Activated CD8-positive, alpha-beta T cell treated with anti-CD3 and anti-CD28 coated beads, Interleukin-2, amount 10 ng/mL, durations not matched to agents 7 days and 5 days (primary cell): ENCODE measurements at regions of chr20 and their contacts with region 1.

Region 1: GRCh38 chr20:24992487-24993205 is at the start of gene APMAP:
- DNase-seq: peak; percentile 97
- ATAC-seq: peak; percentile 95
- H3K4me3 Mint-ChIP-seq: peak within 1 kb of the TSS; percentile 96
- H3K27ac Mint-ChIP-seq: peak within 1 kb of the TSS; percentile 94
- H3K4me1 Mint-ChIP-seq: peaks cover 52% of the 10 kb centered on the region
- H3K27me3 Mint-ChIP-seq: no peaks in the 10 kb centered on the region
- total RNA-seq, gene APMAP: 43.2 to 44.0 TPM

Region 2: DNA sequence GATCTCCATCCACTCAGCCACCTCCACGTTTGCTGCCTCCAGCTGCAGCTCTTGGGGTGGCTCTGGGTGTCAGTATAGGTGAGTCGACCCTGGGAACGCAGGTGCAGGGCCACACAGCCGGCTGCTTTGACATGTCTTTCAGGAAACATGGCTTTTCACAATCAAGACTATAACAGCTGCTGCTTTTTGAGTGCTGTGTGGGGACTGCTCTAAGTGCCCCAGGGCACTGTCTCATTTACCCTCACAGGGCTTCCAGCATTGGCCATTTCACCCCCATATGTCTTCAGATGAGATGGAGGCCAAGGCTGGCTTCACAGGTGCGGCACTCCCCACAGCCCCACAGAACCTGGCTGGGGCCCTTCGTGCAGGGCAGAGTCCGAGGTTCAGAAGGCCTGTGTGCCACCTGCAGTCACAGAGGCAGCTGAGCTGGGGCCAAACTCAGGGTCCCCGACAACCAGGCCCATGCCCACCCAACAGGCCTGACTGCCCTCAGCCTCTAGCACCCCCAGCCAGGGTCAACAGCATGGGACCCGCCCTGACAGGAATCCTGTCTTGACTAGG is 58.5 kb before region 1 on chr20:
- CTCF ChIA-PET with region 1: interaction called, 10 read pairs
- POLR2A ChIA-PET with region 1: interaction called, 4 read pairs
- DNase-seq: peak; percentile 17
- ATAC-seq: no peak
- H3K4me3 Mint-ChIP-seq: no peak overlapping the region
- H3K27ac Mint-ChIP-seq: no peak overlapping the region
- H3K4me1 Mint-ChIP-seq: peaks cover 32% of the 10 kb centered on the region
- H3K27me3 Mint-ChIP-seq: no peaks in the 10 kb centered on the region

Region 3: DNA sequence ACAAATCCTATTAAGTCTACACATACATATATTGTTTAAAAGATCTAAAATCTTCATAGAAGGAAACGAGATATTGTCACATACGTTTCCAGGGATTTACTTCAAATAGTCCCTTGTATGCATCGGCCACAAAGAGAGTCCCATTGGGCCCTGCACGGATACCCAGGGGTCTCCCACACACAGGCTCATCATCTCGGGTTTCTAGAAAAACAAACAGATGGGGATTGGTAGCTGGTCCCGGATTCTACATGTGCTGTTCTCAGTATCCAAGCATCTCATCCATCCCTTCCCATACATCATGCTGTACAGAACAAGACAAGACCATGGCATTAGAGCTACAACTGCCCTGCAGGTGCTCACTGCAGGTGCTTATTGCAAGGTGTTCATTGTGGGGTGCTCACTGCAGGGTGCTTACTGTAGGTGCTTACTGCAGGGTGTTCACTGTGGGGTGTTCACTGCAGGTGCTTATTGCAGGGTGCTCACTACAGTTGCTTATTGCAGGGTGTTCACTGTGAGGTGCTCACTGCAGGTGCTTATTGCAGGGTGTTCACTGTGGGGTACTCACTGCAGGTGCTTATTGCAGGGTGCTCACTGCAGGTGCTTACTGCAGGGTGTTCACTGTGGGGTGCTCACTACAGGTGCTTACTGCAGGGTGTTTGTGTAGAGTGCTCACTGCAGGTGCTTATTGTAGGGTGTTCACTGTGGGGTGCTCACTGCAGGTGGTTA is 21.1 kb before region 1 on chr20:
- CTCF ChIA-PET with region 1: no interaction called
- POLR2A ChIA-PET with region 1: no interaction called
- DNase-seq: no peak
- ATAC-seq: no peak
- H3K4me3 Mint-ChIP-seq: no peak overlapping the region
- H3K27ac Mint-ChIP-seq: no peak overlapping the region
- H3K4me1 Mint-ChIP-seq: peaks cover 4% of the 10 kb centered on the region
- H3K27me3 Mint-ChIP-seq: no peaks in the 10 kb centered on the region

Region 4: DNA sequence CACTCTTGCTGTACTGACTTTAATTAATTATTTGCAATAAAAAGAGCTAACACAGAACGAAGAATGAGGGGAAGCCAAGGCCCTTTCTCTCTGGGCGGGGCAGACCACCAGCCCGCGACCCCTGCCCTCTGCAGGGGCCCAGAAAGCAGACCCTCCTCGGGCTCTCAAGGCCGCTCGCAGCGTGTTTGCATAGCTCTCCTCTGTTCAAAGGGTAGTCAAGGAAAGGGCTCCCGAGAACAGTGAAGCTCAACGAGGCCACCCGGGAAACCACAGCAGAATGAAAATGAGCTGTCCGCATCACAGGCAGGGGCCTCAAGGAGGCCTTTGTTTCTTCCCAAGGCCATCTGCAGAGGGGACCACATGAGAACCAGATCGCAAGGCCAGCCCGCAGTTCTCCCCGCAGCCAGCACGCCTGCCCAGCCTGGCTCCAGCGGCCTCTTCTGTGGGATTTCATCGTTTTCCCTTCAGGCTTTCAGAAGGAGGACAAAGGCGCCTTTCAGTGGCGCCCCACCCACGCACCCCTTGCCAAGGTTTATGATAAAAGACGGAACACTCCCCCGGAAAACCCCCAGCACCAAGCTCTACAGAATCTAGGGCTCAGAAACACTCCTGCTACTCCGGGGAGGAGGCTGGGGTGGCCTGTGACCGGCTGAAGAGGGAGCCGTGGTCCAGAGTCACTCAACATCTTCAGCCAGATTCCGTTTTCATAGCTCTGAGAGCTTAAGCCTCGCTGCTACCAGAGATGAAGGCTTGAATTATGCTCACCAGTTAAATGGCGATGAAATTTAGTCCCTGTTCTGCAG is 40.0 kb after region 1 on chr20:
- CTCF ChIA-PET with region 1: interaction called, 13 read pairs
- POLR2A ChIA-PET with region 1: interaction called, 4 read pairs
- DNase-seq: no peak
- ATAC-seq: no peak
- H3K4me3 Mint-ChIP-seq: no peak overlapping the region
- H3K27ac Mint-ChIP-seq: no peak overlapping the region
- H3K4me1 Mint-ChIP-seq: peaks cover 30% of the 10 kb centered on the region
- H3K27me3 Mint-ChIP-seq: no peaks in the 10 kb centered on the region

Region 5: DNA sequence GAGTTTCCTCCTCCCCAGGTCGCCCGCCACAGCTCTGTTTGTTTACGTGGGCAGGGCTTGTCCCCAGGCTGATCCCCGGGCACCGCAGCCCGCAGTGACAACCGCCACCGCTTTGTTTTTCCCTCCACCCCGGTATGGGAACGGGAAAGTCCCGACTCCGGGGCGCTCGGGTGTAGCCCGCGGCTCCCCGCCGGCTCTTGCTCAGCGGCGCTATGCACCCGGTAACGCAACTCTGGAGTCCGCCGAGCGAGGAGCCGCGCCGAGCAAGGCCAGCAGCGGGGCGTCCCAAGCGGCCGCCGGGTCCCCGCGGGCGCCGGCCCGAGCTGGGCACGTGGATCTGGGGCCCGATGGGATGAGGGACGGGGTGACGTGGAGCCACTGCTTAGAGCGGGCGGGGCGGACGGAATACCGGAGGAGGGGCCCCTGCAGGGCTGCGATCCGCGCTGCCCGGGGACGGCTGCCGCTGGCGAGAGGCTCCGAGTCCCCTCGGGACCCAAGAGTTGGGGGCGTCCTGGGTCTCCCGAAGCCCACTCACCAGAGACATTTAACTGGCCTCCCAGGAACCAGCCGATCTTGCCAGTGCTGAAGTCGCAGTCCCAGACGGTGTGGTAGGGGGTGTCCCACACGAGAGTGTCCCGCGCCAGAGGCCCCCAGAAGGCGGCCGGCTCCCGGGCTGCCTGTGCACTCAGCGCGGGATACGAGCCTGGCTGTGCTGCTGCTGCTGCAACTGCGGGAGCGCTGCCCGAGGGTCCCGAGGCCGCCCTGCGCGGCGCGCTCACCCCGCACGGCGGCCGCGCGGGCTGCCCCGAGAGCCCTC is 64.8 kb after region 1 on chr20:
- CTCF ChIA-PET with region 1: interaction called, 191 read pairs
- POLR2A ChIA-PET with region 1: interaction called, 12 read pairs
- DNase-seq: peak; percentile 80
- ATAC-seq: peak; percentile 54
- H3K4me3 Mint-ChIP-seq: peak overlapping the region; percentile 86
- H3K27ac Mint-ChIP-seq: peak overlapping the region; percentile 87
- H3K4me1 Mint-ChIP-seq: peaks cover 47% of the 10 kb centered on the region
- H3K27me3 Mint-ChIP-seq: peaks cover 13% of the 10 kb centered on the region

Region 6: DNA sequence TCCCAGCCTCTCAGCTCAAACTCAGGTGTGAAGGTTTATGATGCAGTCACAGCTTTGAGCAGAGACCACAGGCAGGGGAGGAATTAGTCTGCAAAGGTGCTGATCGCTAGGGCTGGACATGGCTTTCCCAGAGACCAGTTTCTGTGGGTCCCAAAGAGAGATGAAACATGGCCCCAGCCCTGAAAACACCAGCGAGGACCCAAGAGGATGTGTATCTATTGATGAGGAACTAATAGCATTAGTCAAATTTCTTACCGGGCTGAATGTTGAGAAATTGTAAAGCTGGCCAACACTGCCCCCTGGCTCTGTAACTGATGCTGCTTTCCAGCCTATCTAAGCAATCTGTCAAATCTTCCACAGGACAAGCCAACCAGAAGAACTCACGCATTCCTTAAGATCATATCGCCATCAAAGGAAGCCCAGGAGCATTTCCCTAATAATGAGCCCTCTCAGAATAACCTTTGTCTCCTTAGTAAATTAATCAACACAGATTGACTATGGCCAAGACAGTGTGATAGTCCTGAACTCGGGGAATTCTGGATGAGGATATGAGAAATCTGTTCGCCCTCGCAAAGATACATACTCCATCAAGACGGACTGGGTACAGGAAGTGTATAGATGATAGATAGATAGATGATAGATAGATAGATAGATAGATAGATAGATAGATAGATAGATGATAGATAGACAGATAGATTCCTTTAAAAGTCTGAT is 73.1 kb after region 1 on chr20:
- CTCF ChIA-PET with region 1: interaction called, 191 read pairs
- POLR2A ChIA-PET with region 1: interaction called, 4 read pairs
- DNase-seq: peak; percentile 77
- ATAC-seq: peak; percentile 78
- H3K4me3 Mint-ChIP-seq: no peak overlapping the region
- H3K27ac Mint-ChIP-seq: no peak overlapping the region
- H3K4me1 Mint-ChIP-seq: peaks cover 8% of the 10 kb centered on the region
- H3K27me3 Mint-ChIP-seq: peaks cover 43% of the 10 kb centered on the region

Region 7: GRCh38 chr20:25178563-25179438 is 186.2 kb after region 1 on chr20:
- CTCF ChIA-PET with region 1: interaction called, 11 read pairs
- POLR2A ChIA-PET with region 1: no interaction called
- DNase-seq: peak; percentile 38
- ATAC-seq: no peak
- H3K4me3 Mint-ChIP-seq: no peak overlapping the region
- H3K27ac Mint-ChIP-seq: no peak overlapping the region
- H3K4me1 Mint-ChIP-seq: no peaks in the 10 kb centered on the region
- H3K27me3 Mint-ChIP-seq: peaks cover 13% of the 10 kb centered on the region

Region 8: DNA sequence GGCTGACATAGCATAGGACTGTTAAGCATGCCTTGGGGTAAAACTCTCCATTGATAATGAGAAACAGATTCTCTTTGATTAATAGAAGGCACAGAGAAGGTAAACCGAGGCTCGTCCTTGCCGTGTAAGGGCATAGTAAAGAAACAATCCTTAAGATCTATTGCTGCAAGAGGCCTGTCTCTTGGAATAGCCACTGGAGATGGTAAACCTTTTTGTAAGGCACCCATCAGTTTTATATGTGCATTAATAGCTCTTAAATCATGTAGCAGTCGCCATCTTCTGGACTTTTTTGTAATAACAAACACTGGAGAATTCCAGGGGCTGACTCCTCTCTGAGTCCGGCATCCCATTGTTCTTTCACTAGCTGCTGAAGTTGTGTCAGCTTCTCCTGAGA is 406.4 kb after region 1 on chr20:
- CTCF ChIA-PET with region 1: interaction called, 12 read pairs
- POLR2A ChIA-PET with region 1: no interaction called
- DNase-seq: peak; percentile 42
- ATAC-seq: peak; percentile 67
- H3K4me3 Mint-ChIP-seq: no peak overlapping the region
- H3K27ac Mint-ChIP-seq: no peak overlapping the region
- H3K4me1 Mint-ChIP-seq: no peaks in the 10 kb centered on the region
- H3K27me3 Mint-ChIP-seq: peaks cover 9% of the 10 kb centered on the region